Naive thymus-derived CD4-positive, alpha-beta T cell (primary cell): ENCODE measurements at regions of chr4 and their contacts with region 1.

Region 1: DNA sequence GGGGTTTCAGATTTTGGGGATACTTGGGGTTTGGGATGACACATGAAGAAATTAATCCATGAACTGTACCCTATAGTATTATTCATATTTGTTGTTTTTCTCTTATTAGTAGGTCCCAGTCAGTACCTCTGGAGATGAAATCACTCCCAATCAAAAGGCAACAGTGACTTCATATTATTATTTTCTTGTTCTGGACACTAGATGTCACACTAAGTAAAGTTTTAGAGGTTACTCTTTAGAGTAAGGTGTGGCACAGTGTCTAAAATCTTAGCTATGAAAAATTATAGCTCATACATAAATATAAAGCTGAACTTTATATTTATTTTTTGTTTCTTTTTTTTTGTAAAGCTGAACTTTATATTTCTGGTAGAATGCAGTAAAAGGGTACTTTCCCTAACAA is 35.1 kb downstream of the FAM114A1 start:
- DNase-seq: peak in 6 of 9 donors; percentile 27 to 60 (median 49)
- ATAC-seq: peak; percentile 84
- H3K4me3 ChIP-seq: no peak overlapping the region
- H3K4me3 Mint-ChIP-seq: no peak overlapping the region
- H3K27ac ChIP-seq: no peak overlapping the region
- H3K27ac Mint-ChIP-seq: peak overlapping the region in 1 of 9 donors; percentile 36
- H3K4me1 ChIP-seq: no peaks in the 10 kb centered on the region
- H3K4me1 Mint-ChIP-seq: peaks cover 0 to 12% (median 0%) of the 10 kb centered on the region in 7 donors
- H3K27me3 ChIP-seq: no peaks in the 10 kb centered on the region
- H3K27me3 Mint-ChIP-seq: peaks cover 0 to 9% (median 0%) of the 10 kb centered on the region in 5 donors

Region 2: GRCh38 chr4:38759113-38759789 is 143.4 kb before region 1 on chr4:
- CTCF ChIA-PET with region 1: interaction called, 30 read pairs
- POLR2A ChIA-PET with region 1: no interaction called
- intact Hi-C with region 1: loop called in 1 of 2 experiments (anchors 1 kb)
- DNase-seq: peak; percentile 29 to 66 (median 58)
- ATAC-seq: peak; percentile 64
- H3K4me3 ChIP-seq: no peak overlapping the region
- H3K4me3 Mint-ChIP-seq: no peak overlapping the region
- H3K27ac ChIP-seq: no peak overlapping the region
- H3K27ac Mint-ChIP-seq: peak overlapping the region in 2 of 9 donors; percentile 10 to 41
- H3K4me1 ChIP-seq: peaks cover 0 to 5% of the 10 kb centered on the region in 2 donors
- H3K4me1 Mint-ChIP-seq: peaks cover 8 to 31% (median 19%) of the 10 kb centered on the region in 7 donors
- H3K27me3 ChIP-seq: no peaks in the 10 kb centered on the region
- H3K27me3 Mint-ChIP-seq: no peaks in the 10 kb centered on the region

Region 3: DNA sequence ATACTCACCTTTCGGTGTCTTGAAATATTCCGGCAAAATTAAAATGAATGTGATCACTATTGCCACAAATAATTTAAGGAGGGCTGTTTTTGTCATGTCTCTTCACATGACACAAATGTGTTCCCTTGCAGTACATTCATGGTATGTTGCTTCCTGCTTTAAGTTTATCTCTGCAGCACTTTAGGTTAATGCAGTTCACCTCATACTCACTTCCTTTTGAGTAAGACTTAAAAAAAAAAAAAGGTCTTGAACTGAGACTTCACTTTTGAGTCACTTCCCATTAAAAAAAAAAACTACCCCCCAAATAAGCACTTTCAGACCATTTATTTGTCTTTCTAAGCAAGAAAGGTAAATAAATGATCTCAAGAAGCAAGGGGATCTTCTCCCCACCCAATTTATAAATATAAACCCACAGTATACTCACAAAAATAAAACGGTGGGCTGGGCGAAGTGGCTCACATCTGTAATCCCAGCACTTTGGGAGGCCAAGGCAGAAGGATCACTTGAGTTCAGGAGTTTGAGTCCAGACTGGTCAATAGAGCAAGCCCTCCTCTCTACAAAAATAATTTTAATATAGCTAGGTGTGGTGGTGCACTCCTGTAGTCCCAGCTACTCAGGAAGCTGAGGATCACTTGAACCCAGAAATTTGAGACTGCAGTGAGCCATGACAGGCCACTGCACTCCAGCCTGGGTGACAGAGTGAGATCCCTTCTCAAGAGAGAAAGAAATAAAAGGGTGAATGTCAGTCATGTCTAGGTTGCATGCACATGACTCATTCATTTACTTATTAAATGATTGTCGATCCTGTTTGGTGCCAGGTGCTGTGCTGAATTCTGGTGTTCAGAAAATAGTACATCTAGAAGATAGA is 129.8 kb after region 1 on chr4 and contains the start of gene TMEM156:
- CTCF ChIA-PET with region 1: interaction called, 3 read pairs
- POLR2A ChIA-PET with region 1: interaction called, 3 read pairs
- intact Hi-C with region 1: loop called (anchors 1 to 5 kb)
- DNase-seq: peak in 7 of 9 donors; percentile 59 to 77 (median 70)
- ATAC-seq: peak; percentile 93
- H3K4me3 ChIP-seq: peak within 1 kb of the TSS; percentile 61
- H3K4me3 Mint-ChIP-seq: peak within 1 kb of the TSS; percentile 65 to 89 (median 82)
- H3K27ac ChIP-seq: peak within 1 kb of the TSS; percentile 55
- H3K27ac Mint-ChIP-seq: peak within 1 kb of the TSS; percentile 19 to 93 (median 87)
- H3K4me1 ChIP-seq: peaks cover 29 to 45% of the 10 kb centered on the region in 2 donors
- H3K4me1 Mint-ChIP-seq: peaks cover 16 to 55% (median 44%) of the 10 kb centered on the region in 7 donors
- H3K27me3 ChIP-seq: no peaks in the 10 kb centered on the region
- H3K27me3 Mint-ChIP-seq: no peaks in the 10 kb centered on the region
- total RNA-seq, gene TMEM156: 8.6 to 36.4 (median 9.4) TPM

Region 4: DNA sequence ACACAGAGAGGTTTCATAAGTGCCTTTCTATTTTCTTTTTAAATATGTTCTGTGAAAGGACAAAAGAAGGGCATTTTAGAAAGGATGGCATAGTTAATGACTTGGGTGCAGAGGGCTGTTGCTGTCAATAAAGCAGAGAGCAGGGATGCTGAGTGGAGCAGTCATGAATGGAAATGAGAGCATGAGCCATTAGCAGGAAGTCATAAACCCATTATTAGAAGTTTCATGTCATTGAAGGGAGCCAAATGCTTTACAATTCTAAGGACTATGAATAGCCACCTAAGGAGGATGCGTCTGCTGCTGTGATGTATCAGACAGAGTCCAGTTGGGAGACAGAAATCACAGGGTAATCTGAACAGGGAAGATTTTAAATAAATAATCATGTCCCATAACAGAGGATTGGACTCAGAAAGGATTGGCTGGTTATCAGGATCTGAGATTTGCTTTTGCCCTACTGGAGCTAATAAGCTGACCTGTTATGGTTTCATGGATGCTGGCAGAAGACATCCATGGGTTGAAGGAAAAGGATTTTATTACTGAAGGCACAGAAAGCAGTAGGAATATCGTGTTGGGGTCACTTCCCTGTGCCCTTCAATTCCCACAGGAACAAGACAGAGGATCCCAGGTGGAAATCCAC is 232.1 kb after region 1 on chr4:
- CTCF ChIA-PET with region 1: interaction called, 87 read pairs
- POLR2A ChIA-PET with region 1: interaction called, 5 read pairs
- intact Hi-C with region 1: loop called (anchors 1 kb)
- DNase-seq: peak in 1 of 9 donors; percentile 2
- ATAC-seq: no peak
- H3K4me3 ChIP-seq: no peak overlapping the region
- H3K4me3 Mint-ChIP-seq: no peak overlapping the region
- H3K27ac ChIP-seq: no peak overlapping the region
- H3K27ac Mint-ChIP-seq: peak overlapping the region in 1 of 9 donors; percentile 37
- H3K4me1 ChIP-seq: peaks cover 0 to 3% of the 10 kb centered on the region in 2 donors
- H3K4me1 Mint-ChIP-seq: peaks cover 1 to 18% (median 12%) of the 10 kb centered on the region in 7 donors
- H3K27me3 ChIP-seq: no peaks in the 10 kb centered on the region
- H3K27me3 Mint-ChIP-seq: no peaks in the 10 kb centered on the region

Region 5: GRCh38 chr4:39410415-39410814 is 507.7 kb after region 1 on chr4:
- CTCF ChIA-PET with region 1: interaction called, 4 read pairs
- POLR2A ChIA-PET with region 1: no interaction called
- intact Hi-C with region 1: loop called in 1 of 2 experiments (anchors 1 kb)
- DNase-seq: no peak
- ATAC-seq: no peak
- H3K4me3 ChIP-seq: no peak overlapping the region
- H3K4me3 Mint-ChIP-seq: no peak overlapping the region
- H3K27ac ChIP-seq: no peak overlapping the region
- H3K27ac Mint-ChIP-seq: no peak overlapping the region
- H3K4me1 ChIP-seq: no peaks in the 10 kb centered on the region
- H3K4me1 Mint-ChIP-seq: no peaks in the 10 kb centered on the region
- H3K27me3 ChIP-seq: no peaks in the 10 kb centered on the region
- H3K27me3 Mint-ChIP-seq: peaks cover 0 to 10% (median 0%) of the 10 kb centered on the region in 5 donors